ENCODE measurements at regions of chr1 and their contacts with region 1.

Region 1: GRCh38 chr1:182143154-182143657 is 81.7 kb upstream of the ZNF648 start:
- DNase-seq: peak; percentile 82 to 99 (median 97)

Region 2: DNA sequence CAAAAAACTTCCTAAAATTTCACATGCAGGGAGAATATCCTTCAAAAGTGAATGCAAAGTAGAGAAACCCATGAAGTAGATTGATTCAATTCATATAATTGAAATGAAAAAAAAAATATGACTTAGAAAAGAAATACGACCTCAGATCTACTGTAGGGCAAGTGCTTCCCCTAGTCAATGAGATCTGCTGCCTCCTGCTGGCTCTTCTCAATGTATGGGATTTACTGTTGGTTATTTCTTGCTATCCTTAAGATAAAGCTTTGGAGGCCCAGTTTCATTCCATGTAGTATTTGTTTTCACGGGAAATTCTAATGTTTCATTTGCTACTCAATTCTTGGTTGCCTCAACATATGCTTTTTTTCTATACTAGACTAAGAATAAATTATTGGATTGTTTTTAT is 127.8 kb before region 1 on chr1:
- intact Hi-C with region 1: no loop called
- DNase-seq: no peak

Region 3: DNA sequence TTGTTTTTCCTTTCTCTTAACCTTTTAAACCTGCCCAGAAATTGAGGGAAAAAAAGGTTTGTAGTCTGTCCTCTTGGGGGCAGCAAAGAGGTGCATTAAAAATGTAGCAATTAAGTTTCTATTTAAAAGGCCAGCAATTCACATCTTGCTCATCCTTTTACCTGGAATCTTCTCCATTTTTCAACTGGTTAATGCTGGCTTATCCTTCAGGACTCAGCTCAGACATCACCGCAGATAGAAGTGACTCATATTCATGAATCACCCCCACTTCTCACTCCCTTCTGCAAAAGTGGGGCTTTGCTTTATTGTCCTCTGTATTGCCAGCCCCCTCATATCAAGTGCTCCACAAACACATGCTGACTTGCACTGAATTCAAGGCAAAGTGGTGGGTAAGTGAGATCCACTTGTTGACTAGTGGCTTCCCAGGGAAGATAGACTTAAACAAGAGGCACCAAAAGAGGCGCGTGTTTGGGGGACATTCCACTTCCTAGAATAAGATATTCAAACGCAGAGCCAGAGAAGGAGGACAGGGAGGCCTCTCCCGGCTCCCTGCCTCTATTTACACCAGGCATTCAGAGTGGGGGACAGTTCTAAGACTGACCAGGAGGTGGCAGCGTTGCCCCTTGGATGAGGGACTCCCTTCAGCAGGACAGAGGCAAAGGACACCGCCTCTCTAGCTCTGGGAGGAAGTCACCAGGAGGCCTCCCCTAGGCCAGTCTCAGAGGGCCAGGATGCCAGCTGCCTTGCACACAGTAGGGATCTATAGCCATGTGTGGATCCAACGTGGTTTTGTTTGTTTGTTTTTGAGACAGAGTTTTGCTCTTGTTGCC is 58.5 kb before region 1 on chr1:
- intact Hi-C with region 1: loop called (anchors 2 kb)
- DNase-seq: peak; percentile 77 to 98 (median 92)

Region 4: DNA sequence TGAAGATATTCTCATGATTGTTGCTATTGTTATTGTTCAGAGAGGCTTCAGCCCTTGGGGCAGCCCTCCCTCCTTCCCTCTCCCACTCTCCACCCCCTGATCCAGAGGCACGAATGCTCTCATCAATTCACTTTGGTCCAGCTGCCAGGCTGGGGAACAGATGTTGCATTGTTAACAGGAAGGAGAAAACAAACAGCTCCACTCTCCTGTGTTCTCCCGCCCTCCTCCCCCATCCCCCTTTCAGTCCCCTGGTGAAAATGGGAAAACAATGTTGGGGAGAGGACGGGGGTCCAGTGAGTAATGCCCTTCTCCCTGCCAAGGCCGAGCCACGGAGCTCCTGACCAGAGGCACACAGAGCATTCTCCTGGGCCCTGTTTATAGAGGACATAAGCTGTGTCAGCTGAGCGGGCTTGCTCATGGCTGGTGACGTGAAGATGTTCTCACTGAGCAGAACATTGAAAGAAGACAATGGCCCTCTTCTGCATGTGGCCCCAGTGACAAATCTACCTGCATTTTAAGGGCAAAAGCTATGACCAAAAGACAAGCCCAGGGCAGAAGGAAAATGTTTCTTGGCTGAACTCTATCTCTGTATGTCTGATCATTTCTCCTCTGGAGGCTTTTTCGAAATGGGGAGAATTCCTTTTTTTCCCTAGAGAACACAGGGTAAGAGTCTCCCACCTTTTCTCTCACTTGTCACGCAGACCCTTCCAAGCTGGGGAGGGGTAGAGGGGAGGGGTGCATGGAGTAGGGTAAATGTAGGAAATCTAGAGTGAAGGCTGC is 136.7 kb after region 1 on chr1:
- intact Hi-C with region 1: loop called (anchors 1 kb)
- DNase-seq: peak; percentile 52 to 98 (median 86)

Region 5: GRCh38 chr1:182301467-182302198 is 158.4 kb after region 1 on chr1:
- intact Hi-C with region 1: loop called (anchors 5 kb)
- DNase-seq: peak in 4 of 10 donors; percentile 25 to 86 (median 47)

Region 6: GRCh38 chr1:182397771-182398393 is 254.7 kb after region 1 on chr1:
- intact Hi-C with region 1: loop called (anchors 1 kb)
- DNase-seq: no peak

Measured in posterior cingulate gyrus (tissue), 11 donors.